Activated CD4-positive, alpha-beta T cell treated with anti-CD3 and anti-CD28 coated beads for 36 hours (primary cell): ENCODE measurements at regions of chr6 and their contacts with region 1.

Region 1: GRCh38 chr6:128655978-128656498 is 135.6 kb upstream of the PTPRK start:
- DNase-seq: peak; percentile 27
- ATAC-seq: peak; percentile 96
- H3K4me3 Mint-ChIP-seq: peak overlapping the region; percentile 12
- H3K27ac Mint-ChIP-seq: peak overlapping the region; percentile 89
- H3K4me1 Mint-ChIP-seq: peaks cover 38% of the 10 kb centered on the region
- H3K27me3 Mint-ChIP-seq: peaks cover 10% of the 10 kb centered on the region

Region 2: DNA sequence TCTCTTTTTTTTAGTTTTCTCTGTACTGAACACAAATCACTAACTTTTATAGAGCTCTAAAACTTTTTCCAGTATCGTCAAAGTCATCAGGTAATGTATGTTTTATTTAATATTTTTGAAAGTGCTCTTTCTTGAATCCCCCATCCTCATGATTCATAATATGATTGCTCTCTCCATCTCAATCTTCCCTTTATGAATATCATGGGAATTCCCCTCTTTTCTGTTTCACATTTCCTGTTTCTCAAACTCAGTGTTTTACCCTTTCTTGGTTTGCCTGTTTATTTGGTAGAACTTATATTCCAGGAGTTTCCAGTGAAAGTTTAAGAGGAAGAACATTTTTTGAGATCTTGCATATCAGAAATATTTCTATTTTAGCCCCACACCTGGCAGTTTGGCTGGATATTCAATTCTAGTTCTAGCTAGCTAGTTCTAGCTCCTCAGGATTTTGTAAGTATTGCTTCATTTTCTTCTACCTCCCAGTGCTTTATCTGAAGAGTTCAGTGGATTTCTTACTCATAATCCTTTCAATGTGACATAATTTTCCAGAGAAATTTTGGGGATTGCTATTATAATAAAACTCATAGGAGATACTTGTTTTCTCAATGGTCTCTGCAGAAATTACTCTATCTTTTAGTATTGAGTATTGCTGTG is 1085.2 kb before region 1 on chr6:
- CTCF ChIA-PET with region 1: no interaction called
- POLR2A ChIA-PET with region 1: no interaction called
- intact Hi-C with region 1: loop called in 1 of 2 experiments (anchors 10 kb)
- DNase-seq: no peak
- ATAC-seq: peak; percentile 76
- H3K4me3 Mint-ChIP-seq: no peak overlapping the region
- H3K27ac Mint-ChIP-seq: no peak overlapping the region
- H3K4me1 Mint-ChIP-seq: peaks cover 14% of the 10 kb centered on the region
- H3K27me3 Mint-ChIP-seq: peaks cover 5% of the 10 kb centered on the region

Region 3: DNA sequence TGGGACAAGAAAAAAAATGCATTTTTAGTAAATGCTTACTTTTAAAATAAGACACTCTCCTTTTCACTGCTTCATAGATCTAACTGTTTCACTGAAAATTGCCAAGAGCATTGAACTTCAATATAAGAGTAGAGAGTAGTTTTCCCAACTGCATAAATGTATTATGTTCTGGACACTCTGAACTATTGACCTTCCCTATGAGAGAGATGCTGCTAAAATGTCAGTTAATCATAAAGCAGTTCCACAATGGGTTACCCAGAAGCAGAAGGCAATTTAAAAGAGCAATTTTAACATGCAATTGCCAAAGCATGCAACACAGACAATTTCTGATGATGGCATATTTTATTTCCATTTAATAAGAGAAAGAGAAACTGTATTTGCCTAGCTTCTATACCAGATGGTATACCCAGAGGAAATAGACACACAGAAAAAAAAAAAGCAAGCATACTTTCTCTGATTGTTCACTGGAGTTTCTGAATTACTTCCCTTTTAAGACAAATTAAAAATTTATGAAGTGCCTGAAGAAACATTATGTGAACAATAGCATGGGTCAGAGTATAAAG is 476.1 kb before region 1 on chr6:
- CTCF ChIA-PET with region 1: no interaction called
- POLR2A ChIA-PET with region 1: no interaction called
- intact Hi-C with region 1: no loop called
- DNase-seq: no peak
- ATAC-seq: no peak
- H3K4me3 Mint-ChIP-seq: no peak overlapping the region
- H3K27ac Mint-ChIP-seq: no peak overlapping the region
- H3K4me1 Mint-ChIP-seq: peaks cover 3% of the 10 kb centered on the region
- H3K27me3 Mint-ChIP-seq: no peaks in the 10 kb centered on the region

Region 4: GRCh38 chr6:128491610-128492206 is 164.3 kb before region 1 on chr6:
- CTCF ChIA-PET with region 1: no interaction called
- POLR2A ChIA-PET with region 1: no interaction called
- intact Hi-C with region 1: no loop called
- DNase-seq: no peak
- ATAC-seq: no peak
- H3K4me3 Mint-ChIP-seq: no peak overlapping the region
- H3K27ac Mint-ChIP-seq: no peak overlapping the region
- H3K4me1 Mint-ChIP-seq: peaks cover 7% of the 10 kb centered on the region
- H3K27me3 Mint-ChIP-seq: peaks cover 3% of the 10 kb centered on the region

Region 5: DNA sequence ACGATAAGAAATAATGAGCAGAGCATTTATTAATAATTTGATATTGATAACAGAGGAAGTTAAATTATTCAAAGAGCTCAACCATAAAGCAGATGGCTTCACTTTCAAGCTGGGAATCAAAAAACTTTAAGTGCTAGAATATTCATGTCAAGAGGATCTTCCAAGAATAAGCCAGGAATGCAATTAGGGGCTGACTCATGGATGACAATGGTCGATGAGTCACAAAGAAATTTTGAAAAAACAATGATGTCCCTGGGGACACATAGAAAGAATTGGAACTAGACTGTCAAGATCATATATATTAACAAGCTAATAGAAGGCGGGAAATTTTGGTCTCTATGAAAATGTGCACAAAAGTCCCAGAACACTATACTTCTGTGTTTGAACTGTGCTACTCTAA is 531.0 kb after region 1 on chr6:
- CTCF ChIA-PET with region 1: no interaction called
- POLR2A ChIA-PET with region 1: no interaction called
- intact Hi-C with region 1: no loop called
- DNase-seq: no peak
- ATAC-seq: no peak
- H3K4me3 Mint-ChIP-seq: no peak overlapping the region
- H3K27ac Mint-ChIP-seq: no peak overlapping the region
- H3K4me1 Mint-ChIP-seq: no peaks in the 10 kb centered on the region
- H3K27me3 Mint-ChIP-seq: peaks cover 3% of the 10 kb centered on the region

Region 6: DNA sequence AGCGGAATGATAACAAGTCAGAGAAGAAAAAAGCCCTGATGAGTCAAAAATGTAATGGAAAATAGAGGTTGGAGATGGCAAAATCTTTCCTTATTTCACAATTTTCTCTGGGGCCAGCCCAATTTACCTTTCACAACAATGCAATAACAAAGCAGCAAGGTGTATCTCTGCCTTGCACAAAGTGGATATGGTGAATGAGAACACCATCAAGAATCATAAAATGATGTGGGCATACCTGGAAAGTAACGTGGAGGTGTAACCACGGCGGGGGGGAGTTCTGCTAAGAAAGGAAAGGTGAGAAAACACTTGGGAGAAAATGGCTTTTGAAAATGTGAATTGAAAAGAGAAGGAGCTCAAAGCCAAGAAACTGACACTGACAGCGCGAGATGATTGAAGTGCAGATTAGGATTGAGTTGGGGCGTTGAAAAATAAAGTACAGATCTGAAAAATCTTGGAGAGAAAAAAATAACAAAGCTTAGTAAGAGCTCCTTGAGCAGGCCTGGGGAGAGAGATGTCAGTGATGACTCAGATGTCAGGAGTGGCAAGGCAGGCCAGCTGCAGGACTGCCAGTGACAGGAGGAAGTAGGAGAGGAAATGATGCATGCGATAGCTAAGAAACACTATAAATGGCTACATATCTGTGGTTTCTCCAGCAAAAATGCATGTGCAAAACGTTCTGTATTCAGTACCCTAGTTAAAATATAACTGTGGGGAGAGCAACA is 1027.7 kb after region 1 on chr6:
- CTCF ChIA-PET with region 1: no interaction called
- POLR2A ChIA-PET with region 1: no interaction called
- intact Hi-C with region 1: loop called in 1 of 2 experiments (anchors 5 kb)
- DNase-seq: peak; percentile 79
- ATAC-seq: peak; percentile 96
- H3K4me3 Mint-ChIP-seq: peak overlapping the region; percentile 28
- H3K27ac Mint-ChIP-seq: peak overlapping the region; percentile 75
- H3K4me1 Mint-ChIP-seq: peaks cover 52% of the 10 kb centered on the region
- H3K27me3 Mint-ChIP-seq: no peaks in the 10 kb centered on the region

Region 7: GRCh38 chr6:129946439-129947145 is 1290.6 kb after region 1 on chr6:
- CTCF ChIA-PET with region 1: no interaction called
- POLR2A ChIA-PET with region 1: no interaction called
- intact Hi-C with region 1: no loop called
- DNase-seq: no peak
- ATAC-seq: no peak
- H3K4me3 Mint-ChIP-seq: no peak overlapping the region
- H3K27ac Mint-ChIP-seq: no peak overlapping the region
- H3K4me1 Mint-ChIP-seq: no peaks in the 10 kb centered on the region
- H3K27me3 Mint-ChIP-seq: peaks cover 3% of the 10 kb centered on the region